ENCODE measurements at regions of chr1 and their contacts with region 1.

Region 1: DNA sequence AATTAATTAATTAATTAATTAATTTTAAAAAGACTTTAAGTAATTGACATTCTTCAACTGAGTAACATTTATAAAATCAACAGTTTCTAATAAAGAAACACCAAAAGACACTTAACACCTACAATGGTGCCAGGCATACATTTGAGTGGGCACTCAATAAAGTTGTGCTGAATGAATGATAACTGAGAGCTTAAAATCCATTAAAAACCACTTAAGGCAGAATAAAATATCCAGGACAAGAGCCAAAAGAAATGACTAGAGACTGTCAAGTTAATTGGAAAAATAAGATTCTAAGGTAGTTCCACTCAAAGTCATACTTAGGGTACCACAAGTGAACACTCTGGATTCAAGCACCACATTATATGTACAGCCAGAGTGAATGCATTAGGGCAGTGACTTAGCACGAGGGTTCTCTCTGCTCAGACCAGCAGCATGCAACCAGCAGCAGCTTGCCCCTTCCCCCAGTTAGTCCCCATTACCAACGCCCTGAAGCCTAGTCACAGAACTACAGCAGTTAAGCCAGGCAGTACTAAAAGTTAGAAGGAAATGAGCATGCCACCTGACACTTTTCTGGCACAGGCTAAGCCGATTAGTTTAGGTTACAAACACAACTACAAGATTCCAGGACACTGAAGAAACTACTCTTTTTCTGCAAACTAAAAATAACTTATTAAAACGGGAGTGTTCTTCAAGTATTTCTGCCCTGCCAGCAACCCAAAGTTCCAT is 46.5 kb downstream of the LUZP1 start:
- DNase-seq: peak in 4 of 5 donors; percentile 47 to 69 (median 51)
- H3K4me3 ChIP-seq: no peak overlapping the region
- H3K27ac ChIP-seq: no peak overlapping the region
- H3K4me1 ChIP-seq: peaks cover 12% of the 10 kb centered on the region
- H3K27me3 ChIP-seq: no peaks in the 10 kb centered on the region
- CTCF ChIP-seq: no peak
- EP300 ChIP-seq: no peak
- POLR2A ChIP-seq: no peak

Region 2: DNA sequence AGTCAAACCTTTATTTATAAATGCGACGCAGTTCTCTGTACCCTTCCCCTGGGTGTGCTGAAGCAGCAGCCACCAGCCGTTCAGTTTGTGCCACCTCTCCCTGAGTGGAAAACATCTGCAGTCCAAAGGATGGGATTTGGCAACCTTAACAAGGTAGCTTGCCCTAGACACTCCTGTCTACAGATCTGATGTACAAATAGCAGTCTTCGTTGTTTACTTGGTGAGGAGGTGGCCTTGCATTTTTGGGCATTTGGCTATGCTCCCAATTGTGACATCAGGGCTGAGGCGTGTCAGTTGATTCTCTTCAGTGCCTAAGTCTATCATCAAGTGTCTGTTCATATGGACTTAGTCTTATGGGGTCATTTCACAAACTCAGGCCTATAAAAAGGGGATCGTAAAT is 43.2 kb before region 1 on chr1:
- intact Hi-C with region 1: no loop called
- DNase-seq: no peak
- H3K4me3 ChIP-seq: no peak overlapping the region
- H3K27ac ChIP-seq: no peak overlapping the region
- H3K4me1 ChIP-seq: no peaks in the 10 kb centered on the region
- H3K27me3 ChIP-seq: no peaks in the 10 kb centered on the region
- CTCF ChIP-seq: no peak
- EP300 ChIP-seq: no peak
- POLR2A ChIP-seq: no peak

Region 3: DNA sequence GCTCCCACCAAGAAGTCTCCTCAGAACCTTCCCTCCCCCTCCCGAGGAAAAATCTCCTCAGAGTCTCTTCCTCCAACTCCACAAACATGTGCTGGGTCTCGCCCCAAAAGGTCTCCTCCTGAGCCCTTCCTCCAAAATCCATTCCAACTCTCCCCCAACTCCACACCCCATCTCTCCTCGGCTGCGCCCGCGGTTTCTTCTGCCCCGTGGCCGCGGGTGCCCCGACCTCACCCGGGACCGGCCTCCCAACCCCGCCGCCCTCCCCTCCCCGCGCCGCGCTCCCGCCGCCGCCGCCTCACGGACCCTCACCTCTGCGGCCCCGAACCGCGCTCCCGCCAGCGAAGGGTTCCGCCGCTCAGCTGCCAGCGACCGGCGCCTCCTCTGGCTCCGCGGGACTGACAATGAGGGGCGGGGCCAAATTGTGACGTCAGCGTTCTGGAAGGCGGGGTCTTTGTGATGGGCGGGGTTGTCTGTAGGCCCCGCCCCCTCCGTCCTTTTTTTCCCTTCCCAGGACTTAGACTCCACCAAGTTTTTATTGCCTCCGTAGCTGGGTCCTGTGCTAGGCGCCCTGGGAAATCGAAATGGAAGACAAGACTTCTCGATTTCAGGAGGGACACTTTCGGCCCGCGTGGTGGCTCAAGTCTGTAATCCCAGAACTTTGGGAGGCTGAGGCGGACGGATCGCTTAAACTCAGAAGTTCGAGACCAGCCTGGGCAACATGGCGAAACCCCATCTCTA is 46.4 kb after region 1 on chr1 and contains the start of gene LUZP1:
- intact Hi-C with region 1: loop called in 1 of 4 experiments (anchors 5 kb)
- DNase-seq: peak; percentile 89 to 95 (median 94)
- H3K4me3 ChIP-seq: peak within 1 kb of the TSS; percentile 78
- H3K27ac ChIP-seq: peak within 1 kb of the TSS; percentile 85 to 87
- H3K4me1 ChIP-seq: peaks cover 8% of the 10 kb centered on the region
- H3K27me3 ChIP-seq: no peaks in the 10 kb centered on the region
- CTCF ChIP-seq: no peak
- EP300 ChIP-seq: no peak
- POLR2A ChIP-seq: peak; percentile 96
- total RNA-seq, gene LUZP1: 9.4 to 30.7 (median 23.2) TPM